Calu3 (cell line): ENCODE measurements at regions of chr12 and their contacts with region 1.

Region 1: DNA sequence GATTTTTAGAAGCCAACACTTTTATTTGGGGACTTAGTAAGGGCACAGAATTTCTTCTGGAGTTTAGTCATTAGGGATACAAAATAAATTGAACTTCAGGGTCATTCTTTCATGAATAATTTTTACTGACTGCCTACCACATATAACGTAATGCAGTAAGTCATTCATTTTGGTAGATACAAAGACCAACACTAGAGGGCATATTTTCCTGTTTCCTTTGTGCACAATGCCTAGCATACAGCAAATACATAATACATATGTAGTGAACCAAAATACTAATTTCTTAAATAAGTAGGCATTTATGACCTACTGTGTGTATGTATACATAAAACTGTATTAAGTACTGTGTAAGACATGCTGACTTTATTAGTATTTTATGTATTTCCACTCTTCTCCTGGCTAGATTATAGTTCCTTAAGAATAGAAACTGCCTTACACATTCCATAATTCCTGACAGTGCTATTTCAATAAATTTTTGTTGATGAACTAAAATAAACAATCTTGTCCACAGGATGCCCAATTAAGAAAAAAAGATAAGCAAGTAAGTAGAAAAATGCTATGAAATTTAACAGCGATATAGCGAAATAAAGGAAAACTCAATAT is 47.9 kb downstream of the PPP1R12A start:
- DNase-seq: no peak
- H3K4me3 Mint-ChIP-seq: no peak overlapping the region
- H3K27ac Mint-ChIP-seq: no peak overlapping the region
- H3K4me1 Mint-ChIP-seq: peaks cover 39% of the 10 kb centered on the region
- H3K27me3 Mint-ChIP-seq: no peaks in the 10 kb centered on the region
- CTCF ChIP-seq: peak; percentile 43

Region 2: GRCh38 chr12:79818856-79819255 is 68.2 kb before region 1 on chr12:
- CTCF ChIA-PET with region 1: no interaction called
- intact Hi-C with region 1: no loop called
- DNase-seq: no peak
- H3K4me3 Mint-ChIP-seq: no peak overlapping the region
- H3K27ac Mint-ChIP-seq: no peak overlapping the region
- H3K4me1 Mint-ChIP-seq: peaks cover 7% of the 10 kb centered on the region
- H3K27me3 Mint-ChIP-seq: no peaks in the 10 kb centered on the region
- CTCF ChIP-seq: no peak

Region 3: DNA sequence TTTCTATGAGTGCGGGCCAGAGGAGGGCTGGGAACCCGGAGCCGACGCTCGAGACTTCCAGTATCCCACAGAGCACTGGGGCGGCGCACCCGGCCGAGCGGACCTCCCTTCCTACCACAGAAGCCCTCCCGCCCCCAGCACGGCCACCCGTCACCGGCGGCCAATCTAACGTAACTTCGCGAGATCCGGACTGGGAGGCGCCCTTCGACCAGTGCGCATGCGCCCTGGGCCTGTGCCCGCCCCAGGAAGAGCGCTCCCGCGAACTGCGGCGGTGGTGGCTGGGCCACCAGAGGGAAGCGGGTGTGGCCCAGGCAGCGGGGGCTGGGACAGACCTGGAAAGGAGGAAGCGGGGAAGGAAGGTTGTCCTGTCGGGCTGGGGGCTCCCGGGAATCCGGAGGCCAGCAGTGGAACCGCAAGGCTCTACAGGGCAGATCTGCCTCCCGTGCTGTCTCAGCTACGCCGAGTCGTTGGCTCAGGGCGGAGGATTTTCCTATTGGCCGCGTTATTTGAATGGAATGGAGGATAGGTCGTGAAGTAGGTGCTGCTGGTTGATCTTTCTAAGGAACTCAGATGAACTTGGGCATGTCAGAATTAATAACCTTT is 48.1 kb after region 1 on chr12 and contains the start of gene PPP1R12A:
- CTCF ChIA-PET with region 1: no interaction called
- intact Hi-C with region 1: loop called (anchors 2 kb)
- DNase-seq: peak; percentile 99
- H3K4me3 Mint-ChIP-seq: peak within 1 kb of the TSS; percentile 93
- H3K27ac Mint-ChIP-seq: peak within 1 kb of the TSS; percentile 94
- H3K4me1 Mint-ChIP-seq: peaks cover 15% of the 10 kb centered on the region
- H3K27me3 Mint-ChIP-seq: no peaks in the 10 kb centered on the region
- CTCF ChIP-seq: no peak
- total RNA-seq, gene PPP1R12A: 86.7 and 97.4 TPM in 2 replicates

Region 4: DNA sequence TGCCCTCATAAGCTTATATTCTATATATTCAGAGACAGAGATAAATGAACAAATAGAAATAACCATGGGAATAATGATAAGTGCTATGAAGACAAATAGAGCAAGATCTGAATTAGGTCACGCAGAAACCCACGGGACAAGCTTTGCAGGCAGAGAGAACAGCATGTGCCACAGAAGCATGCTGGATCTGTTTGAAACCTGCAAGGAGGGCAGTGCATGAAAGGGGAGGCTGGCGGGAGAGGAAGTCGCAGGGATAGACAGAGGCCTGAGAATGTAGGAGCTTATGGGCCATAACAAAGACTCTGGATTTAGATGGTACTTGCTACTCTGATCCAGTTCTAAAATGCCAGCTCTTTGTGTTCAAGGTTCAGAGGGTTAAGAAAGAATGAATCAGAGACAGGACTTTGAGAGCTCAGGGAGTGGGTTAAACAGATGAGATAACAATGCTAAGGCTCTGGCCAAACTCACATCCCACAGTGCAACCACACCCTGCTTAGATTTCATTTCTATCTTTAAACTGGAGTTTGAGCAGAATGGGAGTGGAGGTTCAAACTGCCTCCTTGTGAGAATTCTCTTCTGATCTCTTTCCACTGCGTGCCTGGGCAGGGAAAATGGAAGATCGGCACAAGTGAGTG is 97.1 kb after region 1 on chr12:
- CTCF ChIA-PET with region 1: no interaction called
- intact Hi-C with region 1: loop called (anchors 10 kb)
- DNase-seq: no peak
- H3K4me3 Mint-ChIP-seq: no peak overlapping the region
- H3K27ac Mint-ChIP-seq: no peak overlapping the region
- H3K4me1 Mint-ChIP-seq: peaks cover 13% of the 10 kb centered on the region
- H3K27me3 Mint-ChIP-seq: no peaks in the 10 kb centered on the region
- CTCF ChIP-seq: no peak